Activated T-helper 2 cell treated with anti-CD3 and anti-CD28 coated beads, Interferon-gamma antibody, Interleukin-2, Interleukin-4, amounts not matched to agents 10 μg/mL and 5 μg/mL and 100 μg/mL, durations not matched to agents 14 hours and 24 hours and 36 hours (primary cell): ENCODE measurements at regions of chr14 and their contacts with region 1.

Region 1: GRCh38 chr14:90903101-90903500 is 86.9 kb upstream of the TTC7B start:
- DNase-seq: peak; percentile 44
- H3K4me3 Mint-ChIP-seq: no peak overlapping the region
- H3K27ac Mint-ChIP-seq: peak overlapping the region; percentile 12
- H3K4me1 Mint-ChIP-seq: peaks cover 31% of the 10 kb centered on the region
- H3K27me3 Mint-ChIP-seq: no peaks in the 10 kb centered on the region

Region 2: GRCh38 chr14:90274808-90275457 is 628.2 kb before region 1 on chr14:
- intact Hi-C with region 1: no loop called
- DNase-seq: no peak
- H3K4me3 Mint-ChIP-seq: no peak overlapping the region
- H3K27ac Mint-ChIP-seq: peak overlapping the region; percentile 79
- H3K4me1 Mint-ChIP-seq: peaks cover 17% of the 10 kb centered on the region
- H3K27me3 Mint-ChIP-seq: no peaks in the 10 kb centered on the region

Region 3: DNA sequence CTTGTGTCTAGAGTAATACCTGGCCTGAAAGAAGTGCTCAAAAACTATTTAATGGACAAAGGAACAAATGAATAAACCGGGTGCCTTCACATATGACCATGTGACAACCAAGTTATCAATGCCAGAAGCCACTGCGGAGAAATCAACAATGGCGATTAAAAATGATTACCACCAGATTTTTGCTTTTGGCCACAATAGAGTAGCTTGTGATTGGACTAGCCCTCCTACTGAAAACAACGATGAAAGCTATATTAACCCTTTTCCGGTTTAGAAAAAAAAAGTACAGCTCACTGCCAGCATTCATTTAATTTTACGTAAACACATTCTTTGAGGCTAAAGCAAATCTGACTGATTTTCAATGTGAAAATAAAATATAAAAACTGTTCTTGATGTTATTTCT is 45.2 kb before region 1 on chr14:
- intact Hi-C with region 1: no loop called
- DNase-seq: no peak
- H3K4me3 Mint-ChIP-seq: no peak overlapping the region
- H3K27ac Mint-ChIP-seq: no peak overlapping the region
- H3K4me1 Mint-ChIP-seq: peaks cover 8% of the 10 kb centered on the region
- H3K27me3 Mint-ChIP-seq: no peaks in the 10 kb centered on the region

Region 4: DNA sequence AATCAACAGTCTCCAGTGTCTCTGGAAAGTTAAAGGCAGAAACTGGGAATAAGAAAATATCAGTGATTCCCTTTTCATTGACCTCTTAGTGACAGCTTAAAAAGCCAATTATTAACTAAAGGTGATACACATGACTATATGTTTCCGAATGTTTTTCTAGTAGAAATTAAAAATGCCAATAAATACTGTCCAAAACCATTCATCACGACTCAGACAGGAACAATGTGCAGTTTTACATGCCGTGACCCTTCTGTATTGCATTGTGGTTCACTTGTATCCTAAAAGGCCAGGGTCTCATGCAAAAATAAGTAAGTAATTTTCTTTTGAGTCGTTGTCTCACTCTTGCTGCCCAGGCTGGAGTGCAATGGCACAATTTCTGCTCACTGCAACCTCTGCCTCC is 19.0 kb after region 1 on chr14:
- intact Hi-C with region 1: no loop called
- DNase-seq: no peak
- H3K4me3 Mint-ChIP-seq: no peak overlapping the region
- H3K27ac Mint-ChIP-seq: no peak overlapping the region
- H3K4me1 Mint-ChIP-seq: peaks cover 2% of the 10 kb centered on the region
- H3K27me3 Mint-ChIP-seq: no peaks in the 10 kb centered on the region

Region 5: GRCh38 chr14:90970167-90970600 is 67.1 kb after region 1 on chr14:
- intact Hi-C with region 1: loop called (anchors 1 kb)
- DNase-seq: no peak
- H3K4me3 Mint-ChIP-seq: peak overlapping the region; percentile 66
- H3K27ac Mint-ChIP-seq: peak overlapping the region; percentile 93
- H3K4me1 Mint-ChIP-seq: peaks cover 45% of the 10 kb centered on the region
- H3K27me3 Mint-ChIP-seq: no peaks in the 10 kb centered on the region

Region 6: DNA sequence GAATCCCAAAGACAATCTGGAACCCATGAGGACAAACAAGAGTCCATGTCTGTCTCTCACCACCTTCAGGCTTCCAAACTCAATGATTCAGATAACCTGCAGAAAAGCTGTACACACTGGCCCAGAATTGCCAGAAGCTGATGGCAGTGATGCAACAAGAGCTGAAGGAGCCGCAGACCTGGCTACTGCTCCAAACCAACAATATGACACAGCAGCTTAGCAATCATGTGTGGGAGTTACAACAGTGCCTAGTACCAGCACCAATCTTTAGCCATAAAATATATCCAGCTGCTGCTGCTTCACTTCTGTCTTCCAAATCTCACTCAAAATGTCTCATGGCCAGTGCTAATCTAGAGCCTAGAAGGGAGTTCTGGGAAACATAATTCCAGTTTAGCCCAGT is 135.3 kb after region 1 on chr14:
- intact Hi-C with region 1: loop called (anchors 10 kb)
- DNase-seq: no peak
- H3K4me3 Mint-ChIP-seq: no peak overlapping the region
- H3K27ac Mint-ChIP-seq: no peak overlapping the region
- H3K4me1 Mint-ChIP-seq: peaks cover 64% of the 10 kb centered on the region
- H3K27me3 Mint-ChIP-seq: no peaks in the 10 kb centered on the region

Region 7: DNA sequence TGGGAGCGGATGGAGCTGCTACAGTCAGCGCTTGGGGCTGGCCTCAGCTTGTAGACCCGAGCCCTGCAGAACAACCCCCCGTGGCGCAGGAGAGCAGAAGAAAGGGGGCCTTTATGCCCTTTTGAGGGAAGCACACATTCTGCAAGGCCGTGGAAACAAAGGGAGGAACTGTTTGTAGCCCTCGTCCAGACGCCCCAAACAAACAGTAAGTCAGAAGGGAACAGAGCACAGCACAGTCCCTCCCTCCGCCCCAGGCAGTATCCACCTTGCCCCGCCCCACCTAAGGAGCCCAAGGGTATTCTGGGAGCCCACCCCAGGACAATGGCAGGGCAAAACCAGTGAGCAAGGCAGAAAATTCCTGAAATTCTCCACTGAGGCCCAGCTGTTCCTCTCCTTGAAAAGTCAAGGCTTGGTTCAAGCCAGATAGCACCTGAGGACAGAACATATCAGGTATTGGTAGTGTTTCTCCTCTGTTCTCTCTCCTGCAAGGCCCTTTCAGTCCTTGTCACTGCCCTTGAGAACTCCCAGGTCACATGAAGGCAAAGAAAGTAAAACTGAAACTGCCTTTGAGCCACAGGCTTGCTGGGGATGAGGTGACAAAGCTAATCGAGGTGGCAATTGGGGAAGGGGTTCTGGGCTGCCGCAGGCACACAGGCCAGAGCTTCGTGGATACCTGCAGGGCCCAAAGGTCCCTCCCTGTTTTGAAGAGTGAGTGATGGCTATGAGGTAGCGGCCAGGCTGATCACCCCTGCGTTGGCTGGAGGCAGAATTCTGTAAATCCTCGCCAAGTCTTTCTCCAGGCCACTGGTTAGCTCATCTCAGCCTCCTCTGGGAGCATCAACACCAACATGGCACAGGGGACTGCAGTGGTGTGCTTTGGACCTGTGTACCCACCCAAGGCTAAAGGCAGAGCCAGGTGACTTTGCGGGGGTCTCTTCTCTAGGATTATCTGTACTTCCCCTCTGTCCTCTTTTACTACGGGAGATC is 211.3 kb after region 1 on chr14:
- intact Hi-C with region 1: loop called (anchors 2 kb)
- DNase-seq: peak; percentile 77
- H3K4me3 Mint-ChIP-seq: peak overlapping the region; percentile 95
- H3K27ac Mint-ChIP-seq: peak overlapping the region; percentile 92
- H3K4me1 Mint-ChIP-seq: peaks cover 59% of the 10 kb centered on the region
- H3K27me3 Mint-ChIP-seq: no peaks in the 10 kb centered on the region

Region 8: GRCh38 chr14:91138511-91139359 is 235.6 kb after region 1 on chr14:
- intact Hi-C with region 1: loop called (anchors 10 kb)
- DNase-seq: peak; percentile 46
- H3K4me3 Mint-ChIP-seq: no peak overlapping the region
- H3K27ac Mint-ChIP-seq: peak overlapping the region; percentile 72
- H3K4me1 Mint-ChIP-seq: peaks cover 52% of the 10 kb centered on the region
- H3K27me3 Mint-ChIP-seq: no peaks in the 10 kb centered on the region

Region 9: DNA sequence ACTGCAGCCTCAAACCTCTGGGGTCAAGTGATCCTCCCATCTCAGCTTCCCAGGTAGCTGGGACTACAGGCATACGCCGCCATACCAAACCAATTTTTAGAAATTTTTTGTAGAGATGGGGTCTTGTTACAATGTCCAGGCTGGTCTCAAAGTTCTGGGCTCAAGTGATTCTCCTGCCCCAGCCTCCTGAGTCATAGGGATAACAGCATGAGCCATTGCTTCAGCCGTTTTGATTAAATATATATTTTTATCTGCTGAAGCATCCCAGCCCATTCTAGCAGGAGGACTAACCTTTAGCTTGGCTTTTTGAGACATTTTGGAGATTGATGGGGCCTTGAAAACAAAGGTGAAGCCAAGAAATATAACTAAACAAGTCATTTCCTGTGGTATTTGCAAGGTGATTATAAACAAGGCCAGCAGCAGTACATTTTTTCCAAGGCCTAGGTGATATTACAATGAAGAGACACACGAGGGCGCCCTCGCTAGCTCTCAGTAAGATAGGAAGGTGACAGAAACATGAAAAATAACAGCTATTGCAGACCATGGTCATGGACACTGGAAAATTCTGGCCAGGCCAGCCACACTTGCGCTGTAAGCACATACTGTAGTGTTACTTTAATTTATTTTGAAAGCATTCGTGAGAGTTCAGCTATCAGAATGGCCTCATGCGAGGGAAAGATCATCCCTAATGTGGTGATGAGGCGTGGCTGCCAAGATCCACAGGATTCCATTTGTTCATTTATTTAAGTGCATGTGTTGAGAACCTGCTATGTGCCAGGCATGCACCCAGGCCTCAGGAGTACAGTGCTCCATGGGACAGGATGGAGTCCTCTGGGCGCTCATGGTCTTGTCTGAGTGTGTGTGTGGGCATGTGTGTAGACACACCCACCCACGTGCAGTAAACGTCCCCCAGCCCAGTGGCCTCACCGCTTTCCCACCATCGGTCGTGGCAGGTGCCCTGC is 274.3 kb after region 1 on chr14:
- intact Hi-C with region 1: loop called (anchors 1 kb)
- DNase-seq: peak; percentile 69
- H3K4me3 Mint-ChIP-seq: no peak overlapping the region
- H3K27ac Mint-ChIP-seq: peak overlapping the region; percentile 86
- H3K4me1 Mint-ChIP-seq: peaks cover 17% of the 10 kb centered on the region
- H3K27me3 Mint-ChIP-seq: no peaks in the 10 kb centered on the region

Region 10: GRCh38 chr14:91286530-91286937 is 383.4 kb after region 1 on chr14:
- intact Hi-C with region 1: loop called (anchors 1 kb)
- DNase-seq: peak; percentile 68
- H3K4me3 Mint-ChIP-seq: no peak overlapping the region
- H3K27ac Mint-ChIP-seq: peak overlapping the region; percentile 66
- H3K4me1 Mint-ChIP-seq: peaks cover 13% of the 10 kb centered on the region
- H3K27me3 Mint-ChIP-seq: no peaks in the 10 kb centered on the region